ENCODE measurements at regions of chr7 and their contacts with region 1.

Region 1: GRCh38 chr7:117385340-117386109 is 41.8 kb downstream of the ASZ1 start:
- DNase-seq: peak; percentile 51
- ATAC-seq: peak; percentile 84
- H3K4me3 ChIP-seq: no peak overlapping the region
- H3K27ac ChIP-seq: no peak overlapping the region
- H3K4me1 ChIP-seq: no peaks in the 10 kb centered on the region
- H3K27me3 ChIP-seq: peaks cover 16% of the 10 kb centered on the region; the same call in 1 of the 2 replicates
- CTCF ChIP-seq: peak; percentile 72

Region 2: GRCh38 chr7:117212969-117213877 is 172.3 kb before region 1 on chr7:
- CTCF ChIA-PET with region 1: no interaction called
- POLR2A ChIA-PET with region 1: no interaction called
- intact Hi-C with region 1: loop called (anchors 1 kb)
- DNase-seq: peak; percentile 78
- ATAC-seq: peak; percentile 70
- H3K4me3 ChIP-seq: no peak overlapping the region
- H3K27ac ChIP-seq: no peak overlapping the region
- H3K4me1 ChIP-seq: no peaks in the 10 kb centered on the region
- H3K27me3 ChIP-seq: no peaks in the 10 kb centered on the region
- CTCF ChIP-seq: peak; percentile 93

Region 3: DNA sequence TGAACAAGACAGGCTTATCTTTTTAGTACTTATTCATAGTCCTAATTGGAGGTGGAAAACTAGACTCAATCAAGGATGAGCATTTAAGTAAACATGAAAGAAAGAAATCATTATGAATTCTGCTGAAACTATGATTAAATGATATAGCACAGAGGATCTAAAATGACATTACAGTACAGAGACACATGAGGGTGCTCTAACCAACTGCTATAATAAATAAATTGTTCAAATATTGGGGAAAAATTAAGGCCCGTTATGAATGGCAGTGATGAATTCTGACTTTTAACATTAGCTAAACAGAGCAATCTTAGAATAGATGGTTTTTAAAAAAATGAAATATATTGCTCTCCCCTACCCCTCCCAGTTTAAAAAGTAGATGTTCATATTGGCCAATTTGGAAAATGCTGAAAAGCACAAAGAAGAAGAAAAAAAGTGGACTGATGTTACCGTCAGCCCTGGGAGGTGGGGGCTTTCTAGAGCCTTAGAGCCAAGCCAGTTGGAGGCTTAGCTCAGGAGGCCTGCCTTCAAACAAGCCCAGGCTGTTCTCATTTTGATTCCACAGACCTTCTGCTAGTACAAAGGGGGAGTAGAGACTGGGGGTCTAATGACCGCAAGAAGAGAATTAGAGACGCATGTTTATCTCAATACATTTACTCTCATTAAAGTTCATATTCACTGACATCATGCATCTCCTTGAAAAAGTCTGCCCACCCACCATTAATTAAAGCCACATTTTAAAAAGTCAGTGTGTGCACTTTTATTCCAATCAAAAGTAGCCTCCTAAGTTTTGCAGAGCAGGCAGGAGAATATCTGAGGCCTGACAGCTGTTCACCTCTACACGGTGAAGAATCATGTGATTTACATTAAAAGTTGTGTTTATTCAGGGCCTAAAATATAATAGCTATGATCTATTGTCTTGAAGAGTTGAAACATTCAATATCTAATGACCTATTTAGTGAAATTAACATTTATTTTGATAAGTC is 72.6 kb before region 1 on chr7:
- CTCF ChIA-PET with region 1: no interaction called
- POLR2A ChIA-PET with region 1: no interaction called
- intact Hi-C with region 1: loop called (anchors 2 kb)
- DNase-seq: no peak
- ATAC-seq: peak; percentile 58
- H3K4me3 ChIP-seq: no peak overlapping the region
- H3K27ac ChIP-seq: no peak overlapping the region
- H3K4me1 ChIP-seq: no peaks in the 10 kb centered on the region
- H3K27me3 ChIP-seq: peaks cover 29% of the 10 kb centered on the region; the same call in 1 of the 2 replicates
- CTCF ChIP-seq: peak; percentile 55

Region 4: DNA sequence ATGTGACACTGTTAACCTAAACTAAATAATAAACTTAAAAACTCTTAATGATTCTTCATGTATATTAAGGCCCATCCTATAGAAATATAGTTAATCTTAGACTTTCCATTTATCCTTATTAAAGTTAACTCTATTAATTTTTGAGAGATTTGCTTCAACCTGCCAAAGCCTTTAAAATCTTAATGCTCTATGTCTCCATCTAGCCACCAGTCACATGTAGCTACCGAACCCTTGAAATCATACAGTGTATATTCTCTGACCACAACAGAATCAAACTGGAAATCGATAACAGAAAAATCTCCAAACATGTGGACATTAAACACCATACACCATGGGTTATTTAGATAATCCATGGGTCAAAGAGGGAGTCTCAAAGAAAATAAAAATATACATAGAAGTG is 10.1 kb before region 1 on chr7:
- CTCF ChIA-PET with region 1: no interaction called
- POLR2A ChIA-PET with region 1: no interaction called
- intact Hi-C with region 1: loop called (anchors 1 kb)
- DNase-seq: peak; percentile 22
- ATAC-seq: peak; percentile 72
- H3K4me3 ChIP-seq: no peak overlapping the region
- H3K27ac ChIP-seq: no peak overlapping the region
- H3K4me1 ChIP-seq: no peaks in the 10 kb centered on the region
- H3K27me3 ChIP-seq: peaks cover 43% of the 10 kb centered on the region
- CTCF ChIP-seq: peak; percentile 51

Region 5: GRCh38 chr7:117538053-117538452 is 152.5 kb after region 1 on chr7:
- CTCF ChIA-PET with region 1: no interaction called
- POLR2A ChIA-PET with region 1: no interaction called
- intact Hi-C with region 1: no loop called
- DNase-seq: no peak
- ATAC-seq: no peak
- H3K4me3 ChIP-seq: no peak overlapping the region
- H3K27ac ChIP-seq: no peak overlapping the region
- H3K4me1 ChIP-seq: no peaks in the 10 kb centered on the region
- H3K27me3 ChIP-seq: peaks cover 6% of the 10 kb centered on the region; the same call in 1 of the 2 replicates
- CTCF ChIP-seq: no peak

Measured in PC-3 (cell line).